ENCODE measurements at regions of chr5 and their contacts with region 1.

Region 1: DNA sequence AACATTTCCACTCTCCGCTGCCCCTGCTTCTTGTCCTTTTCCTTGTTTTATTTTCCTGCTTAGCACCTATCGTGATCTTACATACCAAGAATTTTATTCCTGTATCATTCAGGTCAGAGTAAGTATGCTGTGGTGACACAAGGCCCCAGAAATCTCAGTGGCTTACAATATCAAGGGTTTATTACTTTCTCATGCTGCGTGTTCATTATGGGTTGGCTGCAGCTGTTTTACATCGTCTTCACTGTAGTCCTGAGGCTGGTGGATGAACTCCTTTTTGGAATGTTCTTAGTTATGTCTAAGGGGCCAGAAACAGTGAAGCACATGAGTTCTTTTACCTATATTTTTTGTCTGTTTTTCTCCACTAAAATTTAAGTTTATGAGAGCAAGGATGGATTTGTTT is 51.2 kb downstream of the FCHO2 start:
- DNase-seq: no peak
- ATAC-seq: no peak
- H3K4me3 ChIP-seq: no peak overlapping the region
- H3K27ac ChIP-seq: no peak overlapping the region
- H3K4me1 ChIP-seq: no peaks in the 10 kb centered on the region
- H3K27me3 ChIP-seq: no peaks in the 10 kb centered on the region
- CTCF ChIP-seq: no peak

Region 2: DNA sequence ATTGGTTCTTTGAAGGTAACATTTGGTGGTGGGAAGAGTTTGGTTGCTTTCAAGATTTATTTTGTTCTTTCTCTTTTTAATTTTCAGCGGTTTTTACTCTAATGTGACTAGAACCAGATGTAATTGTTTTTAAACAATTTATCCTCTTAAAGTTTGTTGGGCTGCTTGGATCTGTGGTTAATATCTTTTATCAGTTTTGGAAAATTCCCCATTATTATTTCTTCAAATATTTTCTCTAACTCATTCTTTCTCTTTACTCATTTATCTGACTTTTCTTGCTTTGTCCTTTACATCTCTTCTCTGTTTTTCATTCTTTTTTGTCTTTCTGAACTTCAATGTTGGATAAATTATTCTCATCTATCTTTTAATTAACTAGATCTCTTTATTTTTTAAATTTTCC is 21.3 kb before region 1 on chr5:
- intact Hi-C with region 1: loop called in 1 of 10 experiments (anchors 1 kb)
- DNase-seq: no peak
- ATAC-seq: no peak
- H3K4me3 ChIP-seq: no peak overlapping the region
- H3K27ac ChIP-seq: no peak overlapping the region
- H3K4me1 ChIP-seq: no peaks in the 10 kb centered on the region
- H3K27me3 ChIP-seq: no peaks in the 10 kb centered on the region
- CTCF ChIP-seq: no peak

Region 3: GRCh38 chr5:73044546-73044945 is 37.5 kb after region 1 on chr5:
- intact Hi-C with region 1: no loop called
- DNase-seq: no peak
- ATAC-seq: no peak
- H3K4me3 ChIP-seq: no peak overlapping the region
- H3K27ac ChIP-seq: no peak overlapping the region
- H3K4me1 ChIP-seq: peaks cover 0 to 6% (median 0%) of the 10 kb centered on the region in 9 donors
- H3K27me3 ChIP-seq: no peaks in the 10 kb centered on the region
- CTCF ChIP-seq: no peak

Region 4: GRCh38 chr5:73160239-73160671 is 153.2 kb after region 1 on chr5:
- intact Hi-C with region 1: no loop called
- DNase-seq: no peak
- ATAC-seq: no peak
- H3K4me3 ChIP-seq: no peak overlapping the region
- H3K27ac ChIP-seq: no peak overlapping the region
- H3K4me1 ChIP-seq: no peaks in the 10 kb centered on the region
- H3K27me3 ChIP-seq: peaks cover 0 to 90% (median 16%) of the 10 kb centered on the region in 7 donors
- CTCF ChIP-seq: no peak

Measured in heart right ventricle (tissue), 16 donors.